B cell (primary cell): ENCODE measurements at regions of chr1 and their contacts with region 1.

Region 1: DNA sequence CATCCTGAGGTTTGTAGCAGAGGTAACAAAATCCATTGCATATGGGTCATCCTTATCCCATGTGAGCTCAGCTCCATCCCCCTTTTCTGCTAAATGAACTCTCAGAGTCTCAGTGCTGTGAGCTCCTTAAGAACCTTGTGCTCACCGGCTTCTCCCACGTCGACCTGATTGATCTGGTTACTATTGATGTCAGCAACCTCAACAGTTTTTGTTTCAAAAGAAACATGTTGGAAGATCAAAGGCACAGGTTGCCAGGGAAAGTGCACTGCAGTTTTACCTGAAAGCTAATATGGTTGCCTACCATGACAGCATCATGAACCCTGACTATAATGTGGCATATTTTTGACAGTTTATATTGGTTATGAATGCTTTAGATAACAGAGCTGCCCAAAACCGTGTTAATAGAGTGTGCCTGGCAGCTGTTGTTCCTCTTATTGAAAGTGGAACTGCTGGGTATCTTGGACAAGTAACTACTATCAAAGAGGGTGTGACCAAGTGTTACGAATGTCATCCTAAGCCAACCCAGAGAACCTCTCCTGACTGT is 131.4 kb downstream of the HS2ST1 start:
- DNase-seq: peak; percentile 48
- ATAC-seq: peak; percentile 82
- H3K4me3 ChIP-seq: peak overlapping the region in 1 of 5 experiments; percentile 17
- H3K4me3 Mint-ChIP-seq: peak overlapping the region; percentile 62
- H3K27ac ChIP-seq: peak overlapping the region; percentile 50 to 65
- H3K27ac Mint-ChIP-seq: peak overlapping the region; percentile 86
- H3K4me1 ChIP-seq: peaks cover 16 to 27% of the 10 kb centered on the region in 2 donors
- H3K4me1 Mint-ChIP-seq: peaks cover 46% of the 10 kb centered on the region
- H3K27me3 ChIP-seq: no peaks in the 10 kb centered on the region
- H3K27me3 Mint-ChIP-seq: no peaks in the 10 kb centered on the region
- CTCF ChIP-seq: no peak

Region 2: GRCh38 chr1:87034351-87034750 is 11.5 kb before region 1 on chr1:
- CTCF ChIA-PET with region 1: interaction called, 11 read pairs
- POLR2A ChIA-PET with region 1: no interaction called
- intact Hi-C with region 1: no loop called
- DNase-seq: no peak
- ATAC-seq: no peak
- H3K4me3 ChIP-seq: no peak overlapping the region
- H3K4me3 Mint-ChIP-seq: no peak overlapping the region
- H3K27ac ChIP-seq: no peak overlapping the region
- H3K27ac Mint-ChIP-seq: no peak overlapping the region
- H3K4me1 ChIP-seq: no peaks in the 10 kb centered on the region
- H3K4me1 Mint-ChIP-seq: peaks cover 11% of the 10 kb centered on the region
- H3K27me3 ChIP-seq: no peaks in the 10 kb centered on the region
- H3K27me3 Mint-ChIP-seq: no peaks in the 10 kb centered on the region
- CTCF ChIP-seq: no peak

Region 3: GRCh38 chr1:87061742-87062156 is 15.9 kb after region 1 on chr1:
- CTCF ChIA-PET with region 1: interaction called, 5 read pairs
- POLR2A ChIA-PET with region 1: interaction called, 5 read pairs
- intact Hi-C with region 1: loop called (anchors 2 kb)
- DNase-seq: peak; percentile 57
- ATAC-seq: peak; percentile 35
- H3K4me3 ChIP-seq: no peak overlapping the region
- H3K4me3 Mint-ChIP-seq: peak overlapping the region; percentile 68
- H3K27ac ChIP-seq: peak overlapping the region; percentile 59 to 73
- H3K27ac Mint-ChIP-seq: peak overlapping the region; percentile 79
- H3K4me1 ChIP-seq: peaks cover 49 to 81% of the 10 kb centered on the region in 2 donors
- H3K4me1 Mint-ChIP-seq: peaks cover 80% of the 10 kb centered on the region
- H3K27me3 ChIP-seq: no peaks in the 10 kb centered on the region
- H3K27me3 Mint-ChIP-seq: no peaks in the 10 kb centered on the region
- CTCF ChIP-seq: no peak